Motor neuron (in vitro differentiated cells): ENCODE measurements at regions of chr15 and their contacts with region 1.

Region 1: GRCh38 chr15:99059010-99059981 is 45.6 kb upstream of the SYNM start:
- ATAC-seq: peak; percentile 87 to 96 (median 92)
- H3K4me3 ChIP-seq: peak overlapping the region; percentile 28 to 54 (median 36)
- H3K27ac ChIP-seq: peak overlapping the region in 1 of 2 donors; percentile 37
- H3K4me1 ChIP-seq: peaks cover 0 to 4% of the 10 kb centered on the region in 2 donors

Region 2: DNA sequence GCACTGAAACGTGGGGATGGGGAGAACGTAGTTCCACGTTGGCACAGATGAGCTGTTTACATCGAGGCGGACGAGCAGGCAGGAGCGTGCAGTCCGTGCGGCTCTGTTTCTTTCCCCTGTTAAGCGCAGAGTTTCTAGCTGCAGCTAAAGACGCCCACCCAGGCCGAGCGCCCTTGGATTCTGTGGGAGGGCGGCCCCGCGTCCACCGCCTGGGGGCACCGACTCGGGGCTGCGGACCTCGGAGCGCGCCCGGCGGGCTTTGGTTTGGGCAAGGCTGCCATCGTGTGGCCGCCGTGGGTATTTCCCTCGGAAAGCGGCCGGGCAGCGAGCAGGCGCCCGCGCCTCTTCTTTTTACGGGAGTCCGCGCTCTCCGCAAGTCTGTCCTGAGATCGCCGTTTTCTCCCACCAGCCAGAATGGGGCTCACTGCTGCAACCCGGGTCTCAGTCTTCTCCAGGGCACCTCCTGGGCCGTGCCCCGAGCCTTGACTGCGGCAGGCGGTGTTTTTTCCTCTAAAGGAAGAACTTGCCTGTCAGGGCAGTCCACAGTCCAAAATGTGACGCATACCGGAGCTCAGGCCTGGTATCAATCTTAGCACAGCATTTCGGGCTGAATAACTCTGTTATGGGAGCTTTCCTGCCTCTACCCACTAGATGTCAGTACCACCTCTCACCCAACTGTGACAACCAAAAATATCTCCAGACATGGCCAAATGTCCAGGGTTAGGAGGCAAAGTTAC is 630.9 kb before region 1 on chr15:
- in situ Hi-C with region 1: loop called in 1 of 9 experiments (anchors 25 kb)
- ATAC-seq: peak; percentile 93 to 97 (median 95)
- H3K4me3 ChIP-seq: peak overlapping the region; percentile 11 to 30 (median 28)
- H3K27ac ChIP-seq: no peak overlapping the region
- H3K4me1 ChIP-seq: no peaks in the 10 kb centered on the region

Region 3: GRCh38 chr15:98518823-98519561 is 540.3 kb before region 1 on chr15:
- in situ Hi-C with region 1: loop called in 2 of 9 experiments (anchors 25 kb)
- ATAC-seq: peak; percentile 79 to 97 (median 88)
- H3K4me3 ChIP-seq: no peak overlapping the region
- H3K27ac ChIP-seq: no peak overlapping the region
- H3K4me1 ChIP-seq: peaks cover 2 to 4% of the 10 kb centered on the region in 2 donors

Region 4: GRCh38 chr15:98658831-98659699 is 400.2 kb before region 1 on chr15:
- in situ Hi-C with region 1: loop called in 1 of 9 experiments (anchors 25 kb)
- ATAC-seq: peak; percentile 70 to 90 (median 79)
- H3K4me3 ChIP-seq: no peak overlapping the region
- H3K27ac ChIP-seq: no peak overlapping the region
- H3K4me1 ChIP-seq: peaks cover 5 to 17% of the 10 kb centered on the region in 2 donors

Region 5: GRCh38 chr15:98881526-98882520 is 177.5 kb before region 1 on chr15:
- in situ Hi-C with region 1: loop called in 2 of 9 experiments (anchors 25 kb)
- ATAC-seq: peak in 6 of 8 experiments; percentile 11 to 69 (median 50)
- H3K4me3 ChIP-seq: no peak overlapping the region
- H3K27ac ChIP-seq: no peak overlapping the region
- H3K4me1 ChIP-seq: peaks cover 23 to 30% of the 10 kb centered on the region in 2 donors